Right ventricle myocardium inferior (tissue), 1 donor: ENCODE measurements at regions of chr4 and their contacts with region 1.

Region 1: DNA sequence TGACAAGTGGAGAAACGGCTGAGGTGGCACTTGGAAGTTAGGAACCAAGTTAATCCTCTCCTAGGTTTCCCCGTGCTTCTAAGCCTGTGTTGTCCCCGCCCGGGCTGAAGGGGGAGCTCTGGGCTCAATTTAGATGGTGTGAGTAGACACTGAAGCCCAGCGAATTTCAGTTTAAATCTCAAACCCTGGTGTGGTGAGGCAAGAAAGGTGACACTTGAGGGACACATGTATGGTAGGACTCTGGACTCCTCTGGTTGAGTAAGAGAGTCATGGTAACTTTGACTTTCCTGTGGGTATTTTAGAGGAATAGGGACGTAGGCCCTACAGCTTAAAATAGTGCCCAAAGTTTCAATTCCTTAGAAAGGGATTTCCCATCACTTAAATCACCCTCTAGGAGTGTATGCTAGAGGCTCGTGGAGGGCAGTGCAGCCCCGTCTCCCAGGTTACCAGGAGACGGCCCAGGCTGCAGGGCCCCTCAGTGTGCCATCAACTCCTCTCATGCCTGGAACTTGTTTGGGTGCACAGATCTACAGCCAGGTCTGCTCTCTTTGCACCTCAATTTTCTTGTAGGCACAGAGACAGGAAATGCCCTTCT is 24.0 kb downstream of the HAND2 start:
- DNase-seq: peak; percentile 81
- ATAC-seq: peak; percentile 73

Region 2: DNA sequence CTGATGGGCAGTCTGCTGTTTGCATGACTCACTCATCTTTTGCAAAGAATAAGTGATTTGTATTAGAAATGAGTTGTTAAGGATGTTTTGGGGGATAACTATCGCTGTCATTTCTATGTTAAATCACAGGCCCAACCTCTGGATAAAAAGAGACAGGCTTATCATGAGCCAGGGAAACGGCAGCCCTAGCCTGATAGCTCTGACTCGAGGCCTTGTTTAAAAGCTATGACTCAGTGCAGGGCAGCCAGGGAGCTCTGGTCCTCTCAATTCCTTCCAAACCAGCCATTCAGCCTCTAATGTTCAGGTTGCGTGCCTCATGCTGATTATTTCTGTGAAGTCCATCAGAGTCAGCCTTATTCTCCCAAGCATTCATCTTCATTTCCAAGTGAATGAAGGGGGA is 329.9 kb after region 1 on chr4:
- intact Hi-C with region 1: loop called (anchors 10 kb)
- DNase-seq: peak; percentile 44
- ATAC-seq: peak; percentile 73

Region 3: DNA sequence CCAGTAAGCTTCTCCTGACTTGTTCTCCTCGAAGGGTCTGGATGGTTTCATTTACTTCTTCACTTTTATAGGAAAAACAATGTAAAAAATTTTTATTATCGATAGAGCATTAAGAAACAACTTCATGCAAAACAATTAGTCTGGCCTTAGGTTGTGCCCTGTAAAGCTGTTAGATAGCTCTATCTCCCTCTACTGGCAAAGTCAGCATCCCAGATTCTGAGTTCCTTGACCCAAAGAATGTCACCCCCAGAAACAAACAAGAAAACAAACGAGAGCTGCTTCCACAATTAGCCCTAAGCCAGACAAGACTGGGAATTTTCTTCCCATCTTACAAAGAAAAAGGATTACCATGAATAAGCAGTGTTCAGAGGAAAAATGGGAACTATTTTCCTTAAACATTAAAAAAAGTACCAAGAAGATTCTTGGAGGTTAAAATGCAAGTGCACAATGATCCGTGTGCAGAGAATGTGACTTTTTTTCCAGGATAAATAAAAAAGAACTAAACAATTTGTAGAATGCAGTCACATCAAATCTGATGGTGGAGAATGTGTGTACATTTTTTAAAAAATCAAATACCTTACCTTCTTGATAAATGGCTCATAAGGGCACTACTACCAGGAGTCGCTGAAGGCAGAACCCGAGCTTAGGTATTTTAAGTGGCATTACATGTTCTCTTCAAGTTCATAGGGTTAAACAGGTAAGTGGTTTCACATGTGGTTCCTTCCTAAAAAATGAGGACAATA is 484.3 kb after region 1 on chr4:
- intact Hi-C with region 1: loop called (anchors 5 kb)
- DNase-seq: no peak
- ATAC-seq: peak; percentile 81

Region 4: DNA sequence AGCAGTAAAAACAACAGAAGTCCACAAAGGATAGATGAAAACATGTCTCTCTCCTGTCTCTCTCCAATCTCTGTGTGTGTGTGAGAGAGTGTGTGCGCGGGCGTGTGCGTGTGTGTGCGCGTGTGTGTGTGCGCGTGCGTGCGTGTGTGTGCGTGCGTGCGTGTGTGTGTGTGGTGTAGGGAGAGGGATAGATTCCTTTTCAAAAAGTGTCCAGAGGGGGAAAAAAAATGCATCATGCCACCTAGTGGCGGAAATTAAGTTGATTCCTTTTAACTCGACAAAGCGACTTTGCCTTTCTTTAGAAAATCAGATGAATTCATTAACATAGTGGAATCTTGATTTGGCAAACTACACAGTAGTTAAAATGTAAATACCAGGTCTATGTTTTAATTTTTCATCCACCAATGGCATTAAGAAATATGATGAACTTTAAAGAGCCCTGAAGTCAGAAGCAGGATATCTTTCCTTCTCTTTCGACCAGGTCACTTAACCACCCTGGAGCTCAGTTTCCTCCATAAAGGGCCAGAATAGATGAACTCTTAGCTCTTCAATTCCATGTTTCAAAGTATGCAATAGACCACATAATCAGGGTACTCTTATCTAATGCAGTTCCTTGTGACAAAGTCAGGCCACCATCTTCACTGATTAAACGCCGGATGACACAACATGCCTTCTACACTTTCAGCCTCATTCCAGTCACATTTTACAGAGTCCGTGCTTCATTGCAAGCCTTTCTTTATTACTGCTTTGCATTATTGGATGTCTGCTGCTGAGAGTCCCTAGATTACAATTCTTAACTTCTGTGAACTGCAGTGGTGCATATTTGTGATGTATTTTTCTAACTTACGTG is 614.6 kb after region 1 on chr4:
- intact Hi-C with region 1: loop called (anchors 2 kb)
- DNase-seq: peak; percentile 84
- ATAC-seq: peak; percentile 82

Region 5: GRCh38 chr4:174156239-174156826 is 650.3 kb after region 1 on chr4:
- intact Hi-C with region 1: loop called (anchors 2 kb)
- DNase-seq: no peak
- ATAC-seq: peak; percentile 73

Region 6: GRCh38 chr4:174217273-174218126 is 711.5 kb after region 1 on chr4:
- intact Hi-C with region 1: loop called (anchors 10 kb)
- DNase-seq: peak; percentile 66
- ATAC-seq: peak; percentile 72

Region 7: DNA sequence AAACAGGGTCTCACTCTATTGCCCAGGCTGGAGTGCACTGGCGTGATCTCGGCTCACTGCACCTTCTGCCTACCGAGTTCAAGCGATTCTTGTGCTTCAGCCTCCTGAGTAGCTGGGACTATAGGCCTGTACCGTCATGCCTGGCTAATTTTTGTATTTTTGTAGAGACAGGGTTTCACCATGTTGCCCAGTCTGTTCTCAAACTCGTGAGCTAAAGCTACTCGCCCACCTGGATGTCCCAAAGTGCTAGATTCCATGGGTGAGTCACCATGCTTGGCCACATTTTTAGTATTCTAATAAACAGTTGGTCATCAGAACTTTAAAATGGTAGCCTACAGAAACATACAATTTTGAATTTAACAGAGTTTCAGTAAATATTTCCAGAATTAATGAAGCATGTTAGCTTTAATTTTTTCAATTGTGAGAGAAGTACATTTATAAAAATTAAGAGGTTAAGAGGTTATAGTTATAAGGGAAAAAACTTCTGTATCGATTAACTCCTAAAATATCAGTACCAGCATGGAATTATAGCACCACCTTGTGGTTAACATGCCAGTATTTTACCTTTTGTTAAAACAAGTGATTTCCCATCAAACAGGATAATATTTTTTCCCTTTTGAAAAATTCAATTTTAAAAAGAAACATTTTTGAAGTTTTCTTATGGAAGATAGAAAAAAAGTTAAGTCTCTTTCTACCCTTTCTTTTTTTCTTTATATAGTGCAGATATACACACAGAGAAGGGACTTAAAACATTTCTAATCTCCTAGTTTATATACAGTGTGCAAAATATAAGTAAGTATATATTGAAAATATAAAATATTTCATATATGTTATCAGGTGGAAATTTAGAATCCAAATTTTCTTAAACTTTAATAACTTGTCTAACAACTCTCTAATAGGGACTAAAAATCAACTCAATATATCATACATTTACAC is 813.1 kb after region 1 on chr4:
- intact Hi-C with region 1: loop called (anchors 5 kb)
- DNase-seq: no peak
- ATAC-seq: no peak